Right ventricle myocardium superior (tissue), 1 donor: ENCODE measurements at regions of chr12 and their contacts with region 1.

Region 1: DNA sequence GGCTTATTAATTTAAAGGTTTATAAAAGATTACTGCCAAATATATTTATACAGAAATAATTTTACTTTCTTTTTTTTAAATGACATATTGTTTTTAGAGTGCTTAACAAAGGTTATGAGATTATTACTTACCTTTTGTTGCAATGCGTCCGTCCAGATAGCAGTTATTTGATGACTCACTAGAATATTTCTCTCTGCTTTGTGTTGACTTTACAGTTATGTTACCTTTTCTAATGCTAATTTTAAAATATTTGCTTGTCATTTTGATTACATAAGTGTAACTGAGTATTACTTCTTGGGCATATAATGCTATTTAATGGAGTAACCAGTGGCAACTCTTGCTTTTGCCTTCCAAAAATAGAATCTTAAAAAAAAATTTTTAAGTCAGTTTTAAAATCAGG is 6.3 kb upstream of the PZP start:
- DNase-seq: no peak
- ATAC-seq: no peak

Region 2: GRCh38 chr12:9604287-9604686 is 389.8 kb after region 1 on chr12:
- intact Hi-C with region 1: loop called (anchors 10 kb)
- DNase-seq: no peak
- ATAC-seq: no peak